ENCODE measurements at regions of chr7 and their contacts with region 1.

Region 1: GRCh38 chr7:100177045-100178001 is at the starts of genes GPC2 and STAG3:
- DNase-seq: peak; percentile 99
- ATAC-seq: peak; percentile 89
- H3K4me3 Mint-ChIP-seq: peak within 1 kb of the TSS; percentile 76
- H3K27ac Mint-ChIP-seq: peak within 1 kb of the TSS; percentile 65
- H3K4me1 Mint-ChIP-seq: peaks cover 39% of the 10 kb centered on the region
- H3K27me3 Mint-ChIP-seq: peaks cover 3% of the 10 kb centered on the region
- total RNA-seq, gene GPC2: 5.3 to 6.1 TPM
- total RNA-seq, gene STAG3: 24.7 to 28.3 TPM

Region 2: DNA sequence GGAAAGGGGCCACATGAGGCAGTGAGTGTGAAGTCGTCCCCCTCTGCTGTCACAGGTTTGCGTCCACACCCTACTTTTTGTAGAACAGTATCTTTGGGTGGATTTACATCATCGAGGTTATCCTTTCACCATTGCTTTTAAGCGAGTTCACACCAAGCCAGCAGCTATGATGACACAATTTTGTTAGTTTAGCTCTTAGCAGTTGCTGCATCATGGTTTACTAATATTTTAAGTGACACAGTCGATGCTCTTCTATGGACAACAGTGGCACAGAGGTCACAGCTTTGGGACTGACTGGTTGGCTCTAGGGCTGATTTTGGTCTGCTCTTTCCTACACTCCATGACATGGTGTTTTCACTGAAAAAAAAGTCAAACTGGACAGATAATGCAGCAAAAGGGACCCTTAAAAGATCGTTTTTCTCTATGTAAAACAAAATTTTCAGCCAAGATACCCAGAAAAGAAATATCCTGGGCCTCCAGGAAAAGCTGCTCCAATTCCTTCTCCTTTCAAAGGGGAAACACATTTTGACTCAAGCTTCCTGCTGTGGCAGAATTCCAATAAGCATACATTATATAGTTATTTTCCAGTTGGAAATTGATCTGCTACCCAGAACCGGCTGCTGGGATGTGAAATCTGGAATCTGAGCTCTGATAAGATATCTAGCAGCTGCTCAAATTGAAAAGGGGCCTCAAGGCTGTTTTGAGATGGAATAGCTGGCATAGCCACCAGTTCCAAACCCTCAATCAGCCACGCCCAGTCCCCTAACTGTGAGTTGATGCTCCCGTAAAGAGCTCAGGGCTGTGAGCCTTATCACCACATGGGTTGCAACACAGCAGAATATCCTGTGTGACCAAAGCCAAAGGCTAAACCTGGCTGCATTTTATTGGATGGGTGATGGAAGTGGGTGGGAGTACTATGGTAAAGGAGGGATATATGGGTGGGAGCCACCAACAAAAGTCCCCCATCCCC is 1147.6 kb before region 1 on chr7:
- CTCF ChIA-PET with region 1: no interaction called
- POLR2A ChIA-PET with region 1: no interaction called
- intact Hi-C with region 1: no loop called
- DNase-seq: no peak
- ATAC-seq: no peak
- H3K4me3 Mint-ChIP-seq: no peak overlapping the region
- H3K27ac Mint-ChIP-seq: peak overlapping the region; percentile 58
- H3K4me1 Mint-ChIP-seq: peaks cover 3% of the 10 kb centered on the region
- H3K27me3 Mint-ChIP-seq: no peaks in the 10 kb centered on the region

Region 3: DNA sequence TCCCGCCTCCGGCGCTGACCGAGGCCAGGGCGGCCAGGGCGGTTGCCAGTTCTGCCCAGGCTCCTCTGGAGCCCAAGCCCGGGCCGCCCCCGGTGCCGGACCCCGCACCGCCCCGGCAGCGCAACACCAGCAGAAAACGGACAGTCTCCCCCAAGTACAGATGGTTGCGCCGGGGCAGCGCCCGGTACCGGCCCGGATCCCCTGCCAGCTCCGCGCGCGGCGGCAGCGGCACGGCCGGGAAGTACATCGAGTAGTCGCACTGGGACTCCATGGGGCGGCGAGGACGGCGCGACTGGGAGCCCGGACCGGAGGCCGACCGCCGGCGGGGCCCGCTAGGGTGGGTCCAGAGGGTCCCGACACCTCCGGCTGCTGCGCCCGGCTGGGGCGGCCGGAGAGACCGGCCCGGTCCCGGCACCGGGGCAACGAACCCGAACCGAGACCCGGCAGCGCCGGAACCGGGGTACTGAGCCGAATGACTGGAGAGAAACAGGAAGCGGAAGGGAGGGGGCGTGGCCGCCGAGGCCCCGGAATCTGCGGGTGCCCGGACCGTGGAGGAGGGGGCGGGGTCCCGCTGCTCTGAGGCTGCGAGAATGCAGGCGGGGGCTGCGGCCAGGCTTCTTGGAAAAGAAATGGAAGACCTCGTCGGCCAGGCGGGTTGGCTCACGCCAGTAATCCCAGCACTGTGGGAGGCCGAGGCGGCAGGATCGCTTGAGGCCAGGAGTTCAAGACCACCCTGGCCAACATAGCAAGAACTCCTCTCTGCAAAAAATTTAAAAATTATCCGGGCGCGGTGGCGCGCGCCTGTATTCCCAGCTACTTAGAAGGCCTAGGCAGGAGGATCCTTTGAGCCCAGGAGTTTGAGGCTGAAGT is 18.9 kb before region 1 on chr7 and contains the start of gene TRAPPC14:
- CTCF ChIA-PET with region 1: no interaction called
- POLR2A ChIA-PET with region 1: no interaction called
- intact Hi-C with region 1: loop called (anchors 1 to 2 kb)
- DNase-seq: peak; percentile 96
- ATAC-seq: peak; percentile 82
- H3K4me3 Mint-ChIP-seq: peak within 1 kb of the TSS; percentile 76
- H3K27ac Mint-ChIP-seq: peak within 1 kb of the TSS; percentile 84
- H3K4me1 Mint-ChIP-seq: peaks cover 51% of the 10 kb centered on the region
- H3K27me3 Mint-ChIP-seq: no peaks in the 10 kb centered on the region
- total RNA-seq, gene TRAPPC14: 15.0 to 17.6 TPM

Region 4: DNA sequence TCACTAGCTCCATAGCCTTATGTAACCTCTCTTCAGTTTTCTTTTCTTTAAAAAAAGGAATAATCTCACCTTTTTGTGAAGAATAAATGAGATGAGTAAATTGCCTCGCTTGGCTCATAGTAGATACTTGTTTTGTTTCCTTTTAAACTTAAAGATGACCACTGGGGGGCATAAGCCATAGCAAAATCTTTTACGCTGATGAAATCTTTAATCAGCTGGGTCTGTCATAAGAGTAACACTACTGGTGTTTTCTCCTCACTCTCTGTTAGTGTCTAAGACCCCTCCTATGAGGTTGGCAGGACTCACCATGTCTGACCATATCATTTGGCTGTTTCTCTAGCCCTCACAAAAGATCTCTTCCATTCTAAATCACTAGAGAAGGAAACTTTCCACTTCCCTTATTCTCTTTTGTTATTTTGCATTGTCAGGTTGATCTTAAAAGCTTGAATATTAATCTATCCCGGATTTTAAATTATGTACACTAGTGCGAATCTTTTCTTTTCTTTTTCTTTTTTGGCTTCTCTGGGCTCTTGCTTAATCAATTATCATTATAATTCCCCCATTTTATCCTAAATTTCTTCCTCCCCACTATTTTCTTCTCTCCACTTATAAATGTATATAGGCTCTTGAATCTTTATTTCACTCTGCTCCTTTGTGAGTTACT is 12.9 kb after region 1 on chr7:
- CTCF ChIA-PET with region 1: interaction called, 13 read pairs
- POLR2A ChIA-PET with region 1: no interaction called
- intact Hi-C with region 1: no loop called
- DNase-seq: no peak
- ATAC-seq: peak; percentile 91
- H3K4me3 Mint-ChIP-seq: no peak overlapping the region
- H3K27ac Mint-ChIP-seq: peak overlapping the region; percentile 81
- H3K4me1 Mint-ChIP-seq: peaks cover 38% of the 10 kb centered on the region
- H3K27me3 Mint-ChIP-seq: no peaks in the 10 kb centered on the region

Region 5: GRCh38 chr7:100215895-100216294 is 38.6 kb after region 1 on chr7:
- CTCF ChIA-PET with region 1: interaction called, 6 read pairs
- POLR2A ChIA-PET with region 1: interaction called, 3 read pairs
- intact Hi-C with region 1: loop called in 1 of 2 experiments (anchors 5 kb)
- DNase-seq: no peak
- ATAC-seq: no peak
- H3K4me3 Mint-ChIP-seq: no peak overlapping the region
- H3K27ac Mint-ChIP-seq: peak overlapping the region; percentile 4
- H3K4me1 Mint-ChIP-seq: peaks cover 54% of the 10 kb centered on the region
- H3K27me3 Mint-ChIP-seq: no peaks in the 10 kb centered on the region

Measured in activated CD4-positive, alpha-beta T cell treated with anti-CD3 and anti-CD28 coated beads for 36 hours (primary cell).